ENCODE measurements at regions of chrX and their contacts with region 1.

Region 1: GRCh38 chrX:15471016-15471415 is 22.1 kb downstream of the PIR start:
- DNase-seq: peak; percentile 54
- H3K4me3 ChIP-seq: no peak overlapping the region
- H3K27ac ChIP-seq: no peak overlapping the region; a peak in 2 of 4 replicates
- H3K4me1 ChIP-seq: peaks cover 0 to 8% of the 10 kb centered on the region in 2 experiments; a peak in 2 of 4 replicates
- H3K27me3 ChIP-seq: no peaks in the 10 kb centered on the region
- CTCF ChIP-seq: peak; percentile 95
- EP300 ChIP-seq: no peak
- RAD21 ChIP-seq: peak; percentile 85

Region 2: DNA sequence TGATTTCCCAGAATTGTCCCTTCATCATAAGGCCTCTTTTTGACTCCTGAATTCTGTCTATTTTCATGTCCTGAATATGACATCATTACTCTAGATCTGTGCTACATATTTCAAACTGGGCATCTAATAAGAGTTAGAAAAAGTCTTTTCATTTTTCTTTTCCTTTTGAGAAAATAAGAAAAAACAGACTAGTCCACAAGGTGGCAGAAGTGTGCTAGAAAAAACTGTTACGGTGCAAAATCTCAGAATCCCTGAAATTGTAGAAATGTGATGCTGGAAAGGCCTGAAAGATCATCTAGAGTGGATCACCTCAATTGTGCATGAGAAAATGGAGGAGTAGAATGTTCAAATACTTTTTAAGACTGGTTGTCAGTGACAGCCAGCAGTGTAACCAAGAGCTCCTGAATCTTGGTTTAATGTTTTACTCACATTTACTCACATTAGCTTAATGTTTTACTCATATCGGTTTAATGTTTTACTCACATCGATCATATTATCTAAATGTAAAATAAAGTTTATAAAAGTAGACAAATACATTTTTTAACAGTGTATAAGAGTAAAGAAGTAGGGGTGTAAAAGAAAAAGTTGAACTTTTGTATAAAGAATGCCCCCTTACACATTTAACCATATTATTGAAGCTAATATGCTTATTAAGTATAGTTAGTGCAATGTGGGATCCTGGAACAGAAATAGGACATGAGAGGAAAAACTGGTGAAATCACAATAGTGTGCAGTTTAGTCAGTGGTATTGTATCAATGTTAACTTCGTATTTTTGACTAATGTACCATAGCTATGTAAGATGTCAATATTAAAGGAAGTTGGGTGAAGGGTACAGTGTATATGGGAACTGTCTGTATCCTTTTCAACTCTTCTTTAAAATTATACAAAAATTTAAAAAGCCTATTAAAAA is 170.8 kb before region 1 on chrX:
- CTCF ChIA-PET with region 1: interaction called, 13 read pairs
- POLR2A ChIA-PET with region 1: no interaction called
- DNase-seq: peak; percentile 49
- H3K4me3 ChIP-seq: no peak overlapping the region; a peak in 1 of 4 replicates
- H3K27ac ChIP-seq: no peak overlapping the region; a peak in 1 of 4 replicates
- H3K4me1 ChIP-seq: no peaks in the 10 kb centered on the region; a peak in 1 of 4 replicates
- H3K27me3 ChIP-seq: no peaks in the 10 kb centered on the region
- CTCF ChIP-seq: peak; percentile 70
- EP300 ChIP-seq: no peak
- RAD21 ChIP-seq: peak; percentile 73

Region 3: DNA sequence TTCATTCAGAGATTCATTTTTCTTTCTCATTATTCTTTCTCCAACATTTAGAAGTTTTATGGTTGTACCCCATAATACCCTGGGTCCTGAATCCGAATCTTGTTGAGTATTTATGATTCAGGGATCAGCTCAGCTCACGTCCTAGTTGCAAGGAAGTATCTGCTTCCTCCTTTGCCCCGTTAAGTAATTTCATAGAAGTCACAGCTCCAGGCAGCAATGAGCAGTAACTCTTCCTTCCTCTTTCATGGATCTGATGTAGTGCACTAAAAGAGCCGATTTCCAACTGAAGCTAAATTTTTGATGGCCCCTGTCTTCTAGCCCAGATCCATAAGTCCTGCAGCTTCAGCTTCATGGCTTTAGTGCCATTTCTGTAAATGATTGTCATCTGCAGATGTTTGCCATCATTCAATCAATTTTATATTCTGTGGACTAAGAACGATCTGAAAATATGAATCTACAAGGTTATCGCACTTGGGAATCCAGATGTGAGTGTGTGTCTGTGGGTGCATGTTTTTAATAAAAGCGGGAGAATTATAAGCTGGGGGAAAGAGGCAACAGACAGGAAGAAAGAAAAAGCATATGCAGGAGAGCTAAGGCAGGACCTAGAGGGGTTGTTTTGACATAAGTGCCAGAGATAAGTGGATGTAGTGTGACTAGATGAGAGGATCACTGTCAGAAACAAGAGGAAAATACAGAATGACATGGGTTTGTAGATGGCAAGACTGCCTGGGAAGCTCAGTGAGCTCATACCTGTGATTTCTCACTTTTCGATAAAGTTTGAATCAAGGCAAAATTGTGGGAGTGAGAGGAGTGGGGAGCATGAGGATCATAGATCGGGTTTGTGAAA is 104.3 kb before region 1 on chrX:
- CTCF ChIA-PET with region 1: interaction called, 10 read pairs
- POLR2A ChIA-PET with region 1: no interaction called
- DNase-seq: peak; percentile 45
- H3K4me3 ChIP-seq: no peak overlapping the region
- H3K27ac ChIP-seq: peak overlapping the region in 1 of 2 experiments; percentile 77; a peak in 2 of 4 replicates
- H3K4me1 ChIP-seq: no peaks in the 10 kb centered on the region; a peak in 1 of 4 replicates
- H3K27me3 ChIP-seq: no peaks in the 10 kb centered on the region
- CTCF ChIP-seq: no peak
- EP300 ChIP-seq: peak in 1 of 2 experiments; percentile 86; a peak in 2 of 4 replicates
- RAD21 ChIP-seq: no peak

Region 4: DNA sequence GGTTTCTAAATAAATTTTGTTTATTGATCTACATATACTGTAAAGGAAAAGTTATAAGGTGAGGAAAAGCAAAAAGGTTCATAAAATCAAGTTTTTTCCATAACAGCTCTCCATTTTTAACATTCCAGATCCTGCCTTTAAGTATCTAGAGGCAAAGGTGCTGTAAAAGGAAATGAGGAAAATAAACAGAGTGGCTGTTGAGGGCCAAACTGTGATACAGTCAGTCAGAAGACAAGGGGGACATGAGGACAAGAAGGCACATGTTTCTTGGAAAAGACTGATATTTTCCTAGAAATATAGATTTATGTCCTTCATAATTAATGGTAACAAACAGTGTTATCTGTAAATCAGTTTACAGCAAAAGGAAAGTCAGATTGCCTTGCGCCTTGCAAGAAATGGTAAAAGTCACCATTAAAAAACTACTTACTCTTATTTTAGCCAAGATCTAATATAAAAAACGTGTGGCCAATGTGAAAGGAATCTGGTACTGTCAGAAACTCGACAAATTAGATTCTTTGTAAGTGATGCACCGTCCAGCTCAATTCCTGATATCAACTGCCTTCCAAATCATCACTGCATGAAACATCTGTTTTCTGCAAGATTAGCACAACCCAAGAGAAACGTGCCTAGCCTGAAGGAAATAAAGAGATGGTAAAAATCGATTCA is 52.8 kb before region 1 on chrX:
- CTCF ChIA-PET with region 1: interaction called, 13 read pairs
- POLR2A ChIA-PET with region 1: interaction called, 3 read pairs
- DNase-seq: no peak
- H3K4me3 ChIP-seq: no peak overlapping the region
- H3K27ac ChIP-seq: peak overlapping the region; percentile 59 to 99
- H3K4me1 ChIP-seq: peaks cover 0 to 5% of the 10 kb centered on the region in 2 experiments; a peak in 2 of 4 replicates
- H3K27me3 ChIP-seq: no peaks in the 10 kb centered on the region
- CTCF ChIP-seq: no peak
- EP300 ChIP-seq: peak in 1 of 2 experiments; percentile 92; a peak in 3 of 4 replicates
- RAD21 ChIP-seq: no peak; the same call in 1 of the 2 replicates

Region 5: GRCh38 chrX:15493118-15493962 is 22.3 kb after region 1 on chrX and contains the start of gene PIR:
- CTCF ChIA-PET with region 1: interaction called, 18 read pairs
- POLR2A ChIA-PET with region 1: interaction called, 4 read pairs
- DNase-seq: peak; percentile 83
- H3K4me3 ChIP-seq: peak within 1 kb of the TSS; percentile 63 to 68
- H3K27ac ChIP-seq: peak within 1 kb of the TSS in 1 of 2 experiments; percentile 77; a peak in 2 of 4 replicates
- H3K4me1 ChIP-seq: no peaks in the 10 kb centered on the region; a peak in 1 of 4 replicates
- H3K27me3 ChIP-seq: 0 out of 2 replicates have a peak, but pooled peaks cover 2% of the 10 kb centered on the region
- CTCF ChIP-seq: peak; percentile 62
- EP300 ChIP-seq: no peak
- RAD21 ChIP-seq: peak; percentile 23; the same call in 1 of the 2 replicates
- polyA plus RNA-seq, gene PIR: 12.3 and 13.2 TPM in 2 replicates